A549 (cell line): ENCODE measurements at regions of chr9 and their contacts with region 1.

Region 1: GRCh38 chr9:35732122-35732799 is at the starts of genes CREB3 and TLN1:
- DNase-seq: peak; percentile 98 to 99
- ATAC-seq: peak; percentile 82 to 93
- H3K4me3 ChIP-seq: peak within 1 kb of the TSS; percentile 87
- H3K27ac ChIP-seq: peak within 1 kb of the TSS; percentile 95 to 96
- H3K4me1 ChIP-seq: peaks cover 52% of the 10 kb centered on the region
- CTCF ChIP-seq: peak; percentile 40
- EP300 ChIP-seq: no peak
- POLR2A ChIP-seq: peak; percentile 64
- RAD21 ChIP-seq: peak in 1 of 2 experiments; percentile 36; a peak in 2 of 5 replicates
- polyA plus RNA-seq, gene CREB3: 33.3 and 36.0 TPM in 2 replicates
- polyA plus RNA-seq, gene TLN1: 65.5 and 72.1 TPM in 2 replicates

Region 2: DNA sequence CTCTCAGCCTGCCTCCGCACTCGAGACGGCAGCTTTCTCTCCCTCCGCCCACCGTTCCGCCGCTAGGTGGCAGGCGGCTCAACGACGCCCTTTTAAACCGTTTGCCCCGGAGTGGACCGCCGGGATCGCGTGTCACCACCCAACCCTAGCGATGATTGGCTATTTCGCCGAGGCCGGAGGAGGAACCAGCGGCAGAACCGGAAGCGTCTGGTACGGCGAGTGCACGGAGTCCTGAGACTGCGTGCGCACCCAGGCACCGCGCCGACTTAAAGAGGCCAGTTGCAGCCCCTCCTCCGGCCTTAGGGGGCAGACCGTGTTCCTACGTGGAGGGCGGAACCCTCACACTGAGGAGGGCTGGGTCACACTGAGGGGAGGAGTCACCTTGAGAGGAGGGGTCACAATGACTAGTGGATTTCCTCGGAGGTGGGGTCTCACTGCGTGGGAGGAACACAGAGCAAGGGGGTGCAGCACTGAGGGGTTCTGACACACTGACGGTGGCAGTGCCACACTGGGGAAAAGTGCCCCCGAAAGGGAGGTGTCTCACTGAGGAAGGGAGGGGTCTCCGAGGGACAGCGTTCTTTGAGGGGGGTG is 128.2 kb before region 1 on chr9:
- CTCF ChIA-PET with region 1: interaction called, 4 read pairs
- POLR2A ChIA-PET with region 1: interaction called, 10 read pairs
- DNase-seq: peak; percentile 99 to 100
- ATAC-seq: peak; percentile 82 to 95
- H3K4me3 ChIP-seq: peak overlapping the region; percentile 80
- H3K27ac ChIP-seq: peak overlapping the region; percentile 86 to 95
- H3K4me1 ChIP-seq: peaks cover 11% of the 10 kb centered on the region
- CTCF ChIP-seq: peak; percentile 90
- EP300 ChIP-seq: no peak
- POLR2A ChIP-seq: peak; percentile 84
- RAD21 ChIP-seq: peak; percentile 47 to 67

Region 3: DNA sequence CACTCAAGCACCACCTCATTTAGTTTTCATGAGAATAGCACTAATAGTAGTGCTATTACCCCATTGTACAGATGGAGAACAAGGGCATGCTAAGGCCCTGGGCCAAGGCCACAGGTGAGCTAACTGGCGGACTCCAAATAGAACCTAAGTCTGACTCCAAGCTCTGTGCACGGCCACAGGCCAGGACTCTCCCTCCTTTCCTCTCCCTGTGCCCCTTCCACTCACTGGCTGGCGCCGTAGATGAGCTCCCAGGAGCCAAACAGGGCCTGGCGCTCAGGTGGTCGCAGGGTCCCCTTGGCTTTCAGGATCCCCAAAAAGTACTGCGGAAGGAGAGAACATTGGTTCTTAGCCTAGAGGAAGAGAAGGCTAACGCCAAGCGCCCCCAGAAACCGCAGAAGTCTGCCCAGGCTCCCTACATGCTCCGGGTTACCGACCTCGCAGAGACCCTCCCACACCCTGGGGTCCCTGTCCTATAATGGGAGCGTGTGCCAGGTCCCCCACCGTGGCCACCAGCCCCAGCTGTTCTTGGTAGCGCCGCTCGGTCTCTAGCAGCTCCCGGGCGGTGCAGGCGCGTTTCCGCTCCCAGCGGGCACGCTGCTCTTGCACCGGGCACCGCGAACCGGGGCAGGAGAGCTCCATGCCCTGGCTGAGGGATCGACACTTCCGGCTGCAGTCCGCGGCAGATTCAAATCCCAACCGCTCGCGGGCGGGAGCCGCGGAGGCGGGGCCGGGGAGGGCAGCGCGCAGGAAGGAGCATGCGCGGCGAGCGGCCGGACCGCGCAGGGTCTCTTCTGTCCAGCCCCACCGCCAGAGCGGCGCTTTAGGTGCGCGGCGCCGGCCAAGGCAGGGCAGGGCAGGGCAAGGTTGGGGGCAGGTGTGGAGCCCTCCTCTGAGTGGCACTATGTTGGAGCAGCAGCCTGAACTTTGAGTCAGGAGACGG is 67.5 kb before region 1 on chr9 and contains the start of gene ARHGEF39:
- CTCF ChIA-PET with region 1: interaction called, 243 read pairs
- POLR2A ChIA-PET with region 1: interaction called, 17 read pairs
- DNase-seq: peak; percentile 86 to 94
- ATAC-seq: peak; percentile 87 to 88
- H3K4me3 ChIP-seq: peak within 1 kb of the TSS; percentile 71
- H3K27ac ChIP-seq: peak within 1 kb of the TSS; percentile 94 to 97
- H3K4me1 ChIP-seq: peaks cover 49% of the 10 kb centered on the region
- CTCF ChIP-seq: peak; percentile 47
- EP300 ChIP-seq: no peak
- POLR2A ChIP-seq: peak; percentile 65
- RAD21 ChIP-seq: peak; percentile 39 to 62; a peak in 4 of 5 replicates
- polyA plus RNA-seq, gene ARHGEF39: 17.6 and 21.4 TPM in 2 replicates

Region 4: GRCh38 chr9:35696525-35697215 is 35.6 kb before region 1 on chr9:
- CTCF ChIA-PET with region 1: interaction called, 758 read pairs
- POLR2A ChIA-PET with region 1: interaction called, 11 read pairs
- DNase-seq: peak; percentile 66 to 80
- ATAC-seq: peak; percentile 79 to 88
- H3K4me3 ChIP-seq: no peak overlapping the region
- H3K27ac ChIP-seq: peak overlapping the region; percentile 1 to 43; a peak in 1 of 6 replicates
- H3K4me1 ChIP-seq: peaks cover 16% of the 10 kb centered on the region
- CTCF ChIP-seq: peak; percentile 74
- EP300 ChIP-seq: no peak
- POLR2A ChIP-seq: no peak
- RAD21 ChIP-seq: peak; percentile 41 to 60

Region 5: GRCh38 chr9:35756275-35757225 is 24.3 kb after region 1 on chr9:
- CTCF ChIA-PET with region 1: interaction called, 75 read pairs
- POLR2A ChIA-PET with region 1: interaction called, 5 read pairs
- DNase-seq: peak; percentile 64 to 86
- ATAC-seq: peak; percentile 89 to 91
- H3K4me3 ChIP-seq: peak overlapping the region; percentile 83
- H3K27ac ChIP-seq: peak overlapping the region; percentile 95 to 97
- H3K4me1 ChIP-seq: peaks cover 16% of the 10 kb centered on the region
- CTCF ChIP-seq: peak; percentile 69
- EP300 ChIP-seq: no peak
- POLR2A ChIP-seq: peak; percentile 19
- RAD21 ChIP-seq: peak; percentile 34 to 42; a peak in 3 of 5 replicates